ENCODE measurements at regions of chr5 and their contacts with region 1.

Region 1: DNA sequence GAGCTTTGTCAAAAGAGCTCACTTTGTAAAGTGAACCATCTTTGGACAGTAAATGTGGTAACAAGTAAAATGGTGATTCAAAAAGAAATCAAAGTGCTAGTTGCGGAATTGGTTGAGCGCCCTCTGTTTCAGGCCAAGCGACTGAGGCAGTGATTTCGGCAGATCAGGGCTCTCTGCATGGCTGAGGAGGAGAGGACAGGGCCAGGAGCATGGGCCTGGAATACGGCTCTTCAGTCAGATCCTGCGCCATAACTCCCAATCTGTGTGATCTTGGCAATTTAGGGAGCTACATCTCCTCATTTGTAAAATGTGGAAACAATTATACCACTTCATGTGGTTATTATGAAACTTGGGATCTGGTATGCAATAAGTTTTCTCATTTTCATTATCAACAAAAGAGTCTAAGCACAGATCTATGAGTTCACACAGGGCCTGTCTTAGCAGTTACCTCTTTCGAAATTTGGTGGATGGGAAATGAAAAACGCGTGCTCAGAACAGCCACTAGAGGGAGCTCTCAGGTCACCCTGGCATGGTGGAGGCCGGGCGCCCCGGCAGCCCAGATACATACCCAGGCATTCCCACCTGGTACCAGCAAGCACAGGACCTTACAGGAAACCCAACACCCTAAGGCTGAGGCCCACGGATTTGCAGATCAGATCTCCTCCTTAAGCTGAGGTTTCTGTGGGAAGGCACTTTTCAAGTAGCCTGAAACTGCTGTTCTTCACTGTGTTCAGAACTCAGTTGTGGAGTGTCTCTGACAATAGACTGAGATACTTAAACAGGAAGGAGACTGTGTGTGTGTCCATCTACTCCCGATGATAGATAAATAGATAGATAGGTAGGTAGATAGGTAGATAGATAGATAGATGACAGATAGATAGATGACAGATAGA is 303.7 kb downstream of the RAB3C start:
- DNase-seq: peak; percentile 39 to 72 (median 58)
- ATAC-seq: peak; percentile 45 to 76 (median 60)
- H3K4me3 ChIP-seq: no peak overlapping the region
- H3K27ac ChIP-seq: no peak overlapping the region
- H3K4me1 ChIP-seq: peaks cover 0 to 29% (median 2%) of the 10 kb centered on the region in 12 donors
- H3K27me3 ChIP-seq: no peaks in the 10 kb centered on the region
- CTCF ChIP-seq: peak; percentile 78 to 94 (median 86)
- POLR2A ChIP-seq: no peak

Region 2: GRCh38 chr5:58999804-59000595 is 113.4 kb after region 1 on chr5:
- intact Hi-C with region 1: loop called in 6 of 10 experiments (anchors 5 kb)
- DNase-seq: no peak
- ATAC-seq: no peak
- H3K4me3 ChIP-seq: no peak overlapping the region
- H3K27ac ChIP-seq: no peak overlapping the region
- H3K4me1 ChIP-seq: peaks cover 0 to 29% (median 12%) of the 10 kb centered on the region in 12 donors
- H3K27me3 ChIP-seq: no peaks in the 10 kb centered on the region
- CTCF ChIP-seq: no peak
- POLR2A ChIP-seq: no peak

Region 3: GRCh38 chr5:59007460-59008063 is 121.0 kb after region 1 on chr5:
- intact Hi-C with region 1: loop called in 9 of 10 experiments (anchors 2 to 5 kb)
- DNase-seq: no peak
- ATAC-seq: no peak
- H3K4me3 ChIP-seq: no peak overlapping the region
- H3K27ac ChIP-seq: no peak overlapping the region
- H3K4me1 ChIP-seq: peaks cover 0 to 10% (median 0%) of the 10 kb centered on the region in 12 donors
- H3K27me3 ChIP-seq: no peaks in the 10 kb centered on the region
- CTCF ChIP-seq: peak in 11 of 12 donors; percentile 30 to 63 (median 55)
- POLR2A ChIP-seq: no peak

Region 4: GRCh38 chr5:59039296-59040023 is 152.9 kb after region 1 on chr5:
- intact Hi-C with region 1: loop called in 1 of 10 experiments (anchors 1 kb)
- DNase-seq: peak; percentile 60 to 93 (median 84)
- ATAC-seq: peak; percentile 29 to 79 (median 74)
- H3K4me3 ChIP-seq: peak overlapping the region; percentile 48 to 92 (median 74)
- H3K27ac ChIP-seq: peak overlapping the region; percentile 42 to 91 (median 78)
- H3K4me1 ChIP-seq: peaks cover 0 to 60% (median 29%) of the 10 kb centered on the region in 12 donors
- H3K27me3 ChIP-seq: no peaks in the 10 kb centered on the region
- CTCF ChIP-seq: no peak
- POLR2A ChIP-seq: peak in 1 of 2 donors; percentile 55

Region 5: GRCh38 chr5:59169081-59169784 is 282.7 kb after region 1 on chr5:
- intact Hi-C with region 1: loop called in 6 of 10 experiments (anchors 2 to 5 kb)
- DNase-seq: no peak
- ATAC-seq: peak in 2 of 4 donors; percentile 13 to 44
- H3K4me3 ChIP-seq: no peak overlapping the region
- H3K27ac ChIP-seq: no peak overlapping the region
- H3K4me1 ChIP-seq: peaks cover 0 to 8% (median 0%) of the 10 kb centered on the region in 12 donors
- H3K27me3 ChIP-seq: no peaks in the 10 kb centered on the region
- CTCF ChIP-seq: no peak
- POLR2A ChIP-seq: no peak

Region 6: DNA sequence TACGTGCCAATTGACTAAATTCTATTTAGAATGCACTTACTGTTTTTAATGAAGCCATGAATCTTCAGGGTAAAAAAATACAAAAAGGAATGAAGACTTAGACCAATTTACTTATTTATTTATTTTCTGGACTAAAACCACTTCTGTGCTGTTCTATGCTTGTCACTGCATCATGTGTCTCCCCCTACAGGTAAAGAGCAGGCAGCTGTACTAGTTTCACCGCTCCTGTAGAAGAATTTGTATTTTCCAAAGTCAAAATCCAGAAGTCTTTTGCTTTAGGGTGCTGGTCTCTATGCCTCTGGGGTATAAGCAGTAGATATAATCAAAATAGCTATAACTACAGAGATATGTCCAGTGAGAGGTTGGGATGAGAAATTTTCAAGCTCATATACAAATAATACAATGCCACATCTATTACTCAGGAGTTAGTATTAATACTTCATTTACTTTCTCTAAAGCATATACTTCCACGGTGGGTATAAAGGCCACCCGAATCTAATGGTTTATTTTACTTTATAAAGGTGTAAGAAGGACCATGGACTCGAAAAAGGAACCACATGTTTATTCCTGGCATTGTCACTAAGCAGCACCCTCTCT is 287.8 kb after region 1 on chr5:
- intact Hi-C with region 1: loop called in 8 of 10 experiments (anchors 2 to 5 kb)
- DNase-seq: peak in 1 of 5 donors; percentile 20
- ATAC-seq: peak; percentile 71 to 86 (median 78)
- H3K4me3 ChIP-seq: no peak overlapping the region
- H3K27ac ChIP-seq: no peak overlapping the region
- H3K4me1 ChIP-seq: peaks cover 0 to 12% (median 0%) of the 10 kb centered on the region in 12 donors
- H3K27me3 ChIP-seq: no peaks in the 10 kb centered on the region
- CTCF ChIP-seq: peak; percentile 58 to 89 (median 82)
- POLR2A ChIP-seq: no peak

Region 7: GRCh38 chr5:59380350-59380951 is 493.9 kb after region 1 on chr5:
- intact Hi-C with region 1: loop called in 5 of 10 experiments (anchors 10 kb)
- DNase-seq: no peak
- ATAC-seq: peak in 3 of 4 donors; percentile 61 to 78 (median 62)
- H3K4me3 ChIP-seq: no peak overlapping the region
- H3K27ac ChIP-seq: no peak overlapping the region
- H3K4me1 ChIP-seq: peaks cover 0 to 5% (median 0%) of the 10 kb centered on the region in 12 donors
- H3K27me3 ChIP-seq: no peaks in the 10 kb centered on the region
- CTCF ChIP-seq: peak; percentile 23 to 68 (median 61)
- POLR2A ChIP-seq: no peak

Measured in heart left ventricle (tissue), 16 donors.